Activated CD4-positive, alpha-beta memory T cell treated with anti-CD3 and anti-CD28 coated beads for 36 hours (primary cell): ENCODE measurements at regions of chr6 and their contacts with region 1.

Region 1: GRCh38 chr6:26520853-26521599 is 17.1 kb upstream of the HMGN4 start:
- DNase-seq: peak; percentile 89
- H3K4me3 Mint-ChIP-seq: peak overlapping the region; percentile 72
- H3K27ac Mint-ChIP-seq: peak overlapping the region; percentile 81
- H3K4me1 Mint-ChIP-seq: peaks cover 30% of the 10 kb centered on the region
- H3K27me3 Mint-ChIP-seq: peaks cover 1% of the 10 kb centered on the region

Region 2: DNA sequence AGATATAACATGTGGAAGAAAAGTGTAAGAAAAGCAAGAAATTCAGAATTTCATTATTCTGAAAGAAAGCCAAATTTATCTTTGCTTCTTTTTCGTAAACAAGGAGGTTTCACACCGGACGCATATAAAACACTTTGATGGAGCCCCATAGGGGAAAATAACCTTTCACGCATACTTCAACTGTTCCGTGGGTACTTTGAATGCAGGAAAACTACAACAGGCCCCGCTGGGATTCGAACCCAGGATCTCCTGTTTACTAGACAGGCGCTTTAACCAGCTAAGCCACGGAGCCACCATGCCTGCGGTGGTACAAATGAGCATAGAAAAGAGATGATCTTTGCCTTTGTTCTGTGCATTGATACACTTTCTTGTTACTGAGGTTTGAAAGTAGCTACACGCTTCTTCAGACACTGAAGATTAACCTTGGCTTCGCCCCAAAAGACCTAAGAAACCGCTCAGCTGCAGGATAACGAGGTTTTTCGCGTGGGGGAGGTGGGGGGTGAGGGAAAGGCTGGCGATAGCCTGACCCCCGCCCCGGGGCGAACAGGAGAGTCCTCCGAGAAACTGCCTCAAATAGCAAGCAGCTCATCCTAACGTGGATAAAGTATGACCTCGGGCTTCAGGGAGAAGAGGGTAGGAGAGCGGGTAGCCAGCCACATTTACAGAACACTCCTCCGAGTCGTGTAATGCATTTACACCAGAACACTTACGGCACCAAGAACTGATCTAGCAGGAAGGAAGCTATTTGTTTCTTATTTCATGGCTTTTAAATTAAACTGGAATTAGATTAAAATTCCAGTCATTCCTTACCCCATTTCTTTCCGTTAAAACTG is 11.9 kb after region 1 on chr6:
- CTCF ChIA-PET with region 1: interaction called, 9 read pairs
- POLR2A ChIA-PET with region 1: interaction called, 5 read pairs
- intact Hi-C with region 1: loop called (anchors 1 kb)
- DNase-seq: peak; percentile 95
- H3K4me3 Mint-ChIP-seq: peak overlapping the region; percentile 92
- H3K27ac Mint-ChIP-seq: peak overlapping the region; percentile 92
- H3K4me1 Mint-ChIP-seq: peaks cover 44% of the 10 kb centered on the region
- H3K27me3 Mint-ChIP-seq: peaks cover 2% of the 10 kb centered on the region